CD4-positive, alpha-beta T cell (primary cell): ENCODE measurements at regions of chr2 and their contacts with region 1.

Region 1: DNA sequence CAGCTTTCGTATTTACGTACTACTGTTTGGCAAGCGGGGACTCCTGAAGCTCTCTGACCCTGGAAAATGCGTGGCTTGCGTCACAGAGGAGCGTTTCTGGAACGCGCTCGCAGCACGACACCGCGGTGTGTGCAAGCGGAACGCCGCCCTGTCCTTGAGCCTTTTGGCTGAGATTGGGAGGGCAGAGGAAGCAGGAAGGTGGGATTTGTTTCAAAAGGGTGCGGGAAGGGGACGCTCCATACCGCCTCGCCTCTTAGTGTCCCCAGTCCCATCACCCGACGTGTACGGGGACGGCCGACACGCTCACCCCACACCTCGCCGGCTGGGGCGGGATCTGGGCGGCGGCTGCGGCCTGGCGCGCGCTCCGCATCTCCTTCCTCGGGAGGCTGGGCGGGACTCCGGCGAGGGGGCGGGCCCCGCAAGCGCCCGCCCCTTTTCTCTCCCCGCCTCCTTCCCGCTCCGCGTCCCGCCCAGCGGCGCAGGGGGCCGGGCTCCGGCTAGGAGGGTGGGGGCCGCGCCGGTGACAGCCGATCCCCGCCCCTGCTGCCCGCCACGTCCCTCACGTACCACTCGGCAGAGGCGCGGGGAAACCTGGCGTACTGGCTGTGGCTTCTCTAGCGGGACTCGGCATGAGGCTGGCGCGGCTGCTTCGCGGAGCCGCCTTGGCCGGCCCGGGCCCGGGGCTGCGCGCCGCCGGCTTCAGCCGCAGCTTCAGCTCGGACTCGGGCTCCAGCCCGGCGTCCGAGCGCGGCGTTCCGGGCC is at the start of gene PDK1:
- DNase-seq: peak; percentile 81 to 97 (median 90)
- ATAC-seq: peak; percentile 92
- H3K4me3 ChIP-seq: peak within 1 kb of the TSS; percentile 71
- H3K4me3 Mint-ChIP-seq: peak within 1 kb of the TSS; percentile 97
- H3K27ac ChIP-seq: peak within 1 kb of the TSS; percentile 47 to 86
- H3K27ac Mint-ChIP-seq: peak within 1 kb of the TSS; percentile 92
- H3K4me1 ChIP-seq: peaks cover 21% of the 10 kb centered on the region
- H3K4me1 Mint-ChIP-seq: peaks cover 61% of the 10 kb centered on the region
- H3K27me3 ChIP-seq: no peaks in the 10 kb centered on the region
- H3K27me3 Mint-ChIP-seq: no peaks in the 10 kb centered on the region
- CTCF ChIP-seq: no peak
- total RNA-seq, gene PDK1: 30.0 to 31.1 TPM

Region 2: GRCh38 chr2:171433763-171434670 is 1121.7 kb before region 1 on chr2 and contains the starts of genes DCAF17 and METTL8:
- CTCF ChIA-PET with region 1: no interaction called
- POLR2A ChIA-PET with region 1: no interaction called
- intact Hi-C with region 1: loop called in 1 of 2 experiments (anchors 10 kb)
- DNase-seq: peak; percentile 84 to 97 (median 92)
- ATAC-seq: peak; percentile 91
- H3K4me3 ChIP-seq: peak within 1 kb of the TSS; percentile 65
- H3K4me3 Mint-ChIP-seq: peak within 1 kb of the TSS; percentile 94
- H3K27ac ChIP-seq: peak within 1 kb of the TSS; percentile 93 to 96
- H3K27ac Mint-ChIP-seq: peak within 1 kb of the TSS; percentile 88
- H3K4me1 ChIP-seq: peaks cover 10% of the 10 kb centered on the region
- H3K4me1 Mint-ChIP-seq: peaks cover 62% of the 10 kb centered on the region
- H3K27me3 ChIP-seq: no peaks in the 10 kb centered on the region
- H3K27me3 Mint-ChIP-seq: no peaks in the 10 kb centered on the region
- CTCF ChIP-seq: peak; percentile 59
- total RNA-seq, gene DCAF17: 13.0 to 14.3 TPM
- total RNA-seq, gene METTL8: 9.7 to 11.5 TPM

Region 3: DNA sequence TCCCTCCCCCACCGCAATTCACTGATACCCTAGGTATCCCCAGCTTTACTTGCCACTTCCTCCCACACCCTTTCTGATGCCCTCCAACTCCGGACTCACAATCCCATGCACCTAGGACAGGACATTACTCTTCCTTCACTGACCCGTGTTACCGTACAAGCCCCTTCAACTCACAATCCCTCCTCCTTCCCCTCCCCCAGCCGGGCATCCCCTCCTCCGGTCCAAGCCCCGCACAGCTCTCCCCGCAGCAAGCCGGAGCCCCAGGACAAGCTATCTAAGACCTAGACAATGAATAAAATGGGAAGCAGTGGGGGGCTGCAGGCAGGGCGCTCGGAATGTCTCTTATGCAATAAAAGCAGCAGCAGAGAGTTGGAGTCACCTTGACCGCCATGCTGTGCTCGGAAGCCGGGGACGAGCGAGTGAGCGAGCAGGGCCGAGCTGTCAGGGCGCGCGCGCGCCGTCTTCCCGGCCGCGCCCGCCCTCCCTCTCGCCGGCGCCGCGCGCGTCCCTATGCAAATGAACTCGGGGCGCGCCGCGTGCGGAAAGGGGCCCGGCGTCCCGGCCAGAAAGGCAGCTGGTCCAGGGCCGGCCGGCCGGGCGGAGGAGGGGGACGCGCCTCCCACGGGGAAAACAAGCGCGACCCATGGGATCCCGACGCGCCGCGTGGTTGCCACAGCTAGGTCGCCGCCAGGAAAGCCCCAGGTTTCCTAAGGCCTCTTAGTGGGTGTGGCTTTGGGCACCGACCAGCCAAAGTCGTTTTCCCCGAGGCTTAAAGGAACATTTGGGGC is 661.7 kb before region 1 on chr2 and contains the start of gene SLC25A12:
- CTCF ChIA-PET with region 1: interaction called, 3 read pairs
- POLR2A ChIA-PET with region 1: no interaction called
- intact Hi-C with region 1: loop called in 1 of 2 experiments (anchors 10 kb)
- DNase-seq: peak; percentile 43 to 87 (median 68)
- ATAC-seq: peak; percentile 92
- H3K4me3 ChIP-seq: peak within 1 kb of the TSS; percentile 93
- H3K4me3 Mint-ChIP-seq: peak within 1 kb of the TSS; percentile 94
- H3K27ac ChIP-seq: peak within 1 kb of the TSS; percentile 21 to 33
- H3K27ac Mint-ChIP-seq: peak within 1 kb of the TSS; percentile 80
- H3K4me1 ChIP-seq: peaks cover 6% of the 10 kb centered on the region
- H3K4me1 Mint-ChIP-seq: peaks cover 44% of the 10 kb centered on the region
- H3K27me3 ChIP-seq: peaks cover 0 to 3% of the 10 kb centered on the region in 2 experiments
- H3K27me3 Mint-ChIP-seq: no peaks in the 10 kb centered on the region
- CTCF ChIP-seq: no peak
- total RNA-seq, gene SLC25A12: 8.7 to 9.5 TPM

Region 4: DNA sequence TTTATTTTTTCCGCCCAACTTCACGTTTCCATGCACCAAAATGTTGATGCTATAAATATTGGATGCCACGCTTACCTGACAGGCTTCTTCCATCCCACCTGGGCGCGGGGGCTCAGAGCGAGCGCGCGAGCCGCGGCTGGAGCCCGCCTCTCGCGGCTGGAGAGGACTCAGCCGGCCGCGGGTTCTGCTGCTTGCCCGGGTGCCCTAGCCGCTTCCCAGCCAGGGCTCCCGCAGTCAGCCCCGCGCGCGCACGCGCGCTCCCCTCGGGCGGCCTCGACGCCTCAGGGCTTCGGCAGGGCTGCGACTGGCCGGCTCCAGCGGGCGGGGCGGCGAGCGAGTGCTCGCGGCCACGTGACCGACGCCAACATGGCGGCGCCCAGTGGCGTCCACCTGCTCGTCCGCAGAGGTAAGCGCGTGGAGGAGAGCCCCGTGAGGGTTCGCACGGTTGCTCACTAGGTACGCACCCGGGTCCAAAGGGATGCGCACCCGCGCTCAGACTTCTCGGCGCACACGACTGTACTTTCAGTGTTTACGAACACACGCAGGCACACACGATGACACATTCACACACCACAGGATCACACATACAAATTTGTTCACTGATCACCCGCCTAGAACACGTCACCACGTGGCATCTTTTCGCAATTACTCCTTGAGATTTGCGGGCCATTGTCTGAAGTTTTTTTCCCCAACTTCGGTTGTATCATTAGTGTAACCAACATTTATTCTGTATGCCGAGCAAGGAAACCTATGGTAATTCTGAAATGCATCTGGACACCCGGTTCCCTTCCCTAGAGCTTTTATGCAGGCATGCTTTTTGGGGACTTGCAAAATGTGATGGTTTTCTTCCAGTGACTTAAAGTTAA is 555.9 kb before region 1 on chr2 and contains the start of gene METAP1D:
- CTCF ChIA-PET with region 1: no interaction called
- POLR2A ChIA-PET with region 1: no interaction called
- intact Hi-C with region 1: loop called in 1 of 2 experiments (anchors 5 kb)
- DNase-seq: peak; percentile 61 to 93 (median 82)
- ATAC-seq: peak; percentile 90
- H3K4me3 ChIP-seq: peak within 1 kb of the TSS; percentile 75
- H3K4me3 Mint-ChIP-seq: peak within 1 kb of the TSS; percentile 88
- H3K27ac ChIP-seq: peak within 1 kb of the TSS; percentile 23 to 38
- H3K27ac Mint-ChIP-seq: peak within 1 kb of the TSS; percentile 74
- H3K4me1 ChIP-seq: peaks cover 12% of the 10 kb centered on the region
- H3K4me1 Mint-ChIP-seq: peaks cover 23% of the 10 kb centered on the region
- H3K27me3 ChIP-seq: no peaks in the 10 kb centered on the region
- H3K27me3 Mint-ChIP-seq: peaks cover 8% of the 10 kb centered on the region
- CTCF ChIP-seq: no peak
- total RNA-seq, gene METAP1D: 7.2 to 7.9 TPM

Region 5: GRCh38 chr2:172427256-172427989 is 128.3 kb before region 1 on chr2 and contains the start of gene ITGA6:
- CTCF ChIA-PET with region 1: no interaction called
- POLR2A ChIA-PET with region 1: no interaction called
- intact Hi-C with region 1: loop called in 1 of 2 experiments (anchors 5 kb)
- DNase-seq: peak; percentile 65 to 91 (median 72)
- ATAC-seq: peak; percentile 73
- H3K4me3 ChIP-seq: peak within 1 kb of the TSS; percentile 78
- H3K4me3 Mint-ChIP-seq: peak within 1 kb of the TSS; percentile 93
- H3K27ac ChIP-seq: peak within 1 kb of the TSS; percentile 13 to 74
- H3K27ac Mint-ChIP-seq: peak within 1 kb of the TSS; percentile 89
- H3K4me1 ChIP-seq: peaks cover 51% of the 10 kb centered on the region
- H3K4me1 Mint-ChIP-seq: peaks cover 45% of the 10 kb centered on the region
- H3K27me3 ChIP-seq: no peaks in the 10 kb centered on the region
- H3K27me3 Mint-ChIP-seq: no peaks in the 10 kb centered on the region
- CTCF ChIP-seq: no peak
- total RNA-seq, gene ITGA6: 53.5 to 58.0 TPM

Region 6: DNA sequence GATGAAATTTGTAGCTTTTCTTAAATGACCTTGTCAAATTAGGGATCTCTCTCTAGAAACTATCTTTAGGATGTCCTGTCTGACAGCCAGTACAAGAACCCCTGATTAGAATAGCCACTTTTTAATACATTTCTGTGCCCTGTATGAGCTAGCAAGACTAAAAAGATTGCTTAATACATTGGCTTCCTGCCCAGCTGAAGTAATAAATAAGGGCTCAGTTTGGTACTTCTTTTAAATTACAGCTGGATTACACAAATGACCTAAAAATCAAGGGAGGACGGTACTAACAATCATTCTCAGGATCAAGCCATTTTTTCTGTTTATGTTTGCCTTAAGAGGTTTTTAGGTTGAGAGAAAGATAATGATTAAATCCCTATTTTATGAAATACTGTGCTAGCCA is 1704.3 kb after region 1 on chr2:
- CTCF ChIA-PET with region 1: no interaction called
- POLR2A ChIA-PET with region 1: no interaction called
- intact Hi-C with region 1: loop called in 1 of 2 experiments (anchors 10 kb)
- DNase-seq: no peak
- ATAC-seq: no peak
- H3K4me3 ChIP-seq: no peak overlapping the region
- H3K4me3 Mint-ChIP-seq: no peak overlapping the region
- H3K27ac ChIP-seq: no peak overlapping the region
- H3K27ac Mint-ChIP-seq: no peak overlapping the region
- H3K4me1 ChIP-seq: no peaks in the 10 kb centered on the region
- H3K4me1 Mint-ChIP-seq: no peaks in the 10 kb centered on the region
- H3K27me3 ChIP-seq: peaks cover 0 to 3% of the 10 kb centered on the region in 2 experiments
- H3K27me3 Mint-ChIP-seq: peaks cover 24% of the 10 kb centered on the region
- CTCF ChIP-seq: no peak